ENCODE measurements at regions of chr1 and their contacts with region 1.

Region 1: GRCh38 chr1:66676613-66677298 is 75.5 kb upstream of the DYNLT5 start:
- DNase-seq: no peak
- H3K4me3 ChIP-seq: no peak overlapping the region
- H3K27ac ChIP-seq: peak overlapping the region; percentile 77 to 86
- H3K4me1 ChIP-seq: peaks cover 10 to 33% of the 10 kb centered on the region in 2 donors
- H3K27me3 ChIP-seq: no peaks in the 10 kb centered on the region
- CTCF ChIP-seq: no peak

Region 2: GRCh38 chr1:66533804-66534740 is 142.7 kb before region 1 on chr1 and contains the start of gene SGIP1:
- intact Hi-C with region 1: loop called (anchors 5 kb)
- DNase-seq: peak; percentile 46 to 88
- H3K4me3 ChIP-seq: peak within 1 kb of the TSS; percentile 58 to 71
- H3K27ac ChIP-seq: peak within 1 kb of the TSS; percentile 92 to 95
- H3K4me1 ChIP-seq: peaks cover 3 to 7% of the 10 kb centered on the region in 2 donors
- H3K27me3 ChIP-seq: no peaks in the 10 kb centered on the region
- CTCF ChIP-seq: no peak
- total RNA-seq, gene SGIP1: 1.6 TPM

Region 3: DNA sequence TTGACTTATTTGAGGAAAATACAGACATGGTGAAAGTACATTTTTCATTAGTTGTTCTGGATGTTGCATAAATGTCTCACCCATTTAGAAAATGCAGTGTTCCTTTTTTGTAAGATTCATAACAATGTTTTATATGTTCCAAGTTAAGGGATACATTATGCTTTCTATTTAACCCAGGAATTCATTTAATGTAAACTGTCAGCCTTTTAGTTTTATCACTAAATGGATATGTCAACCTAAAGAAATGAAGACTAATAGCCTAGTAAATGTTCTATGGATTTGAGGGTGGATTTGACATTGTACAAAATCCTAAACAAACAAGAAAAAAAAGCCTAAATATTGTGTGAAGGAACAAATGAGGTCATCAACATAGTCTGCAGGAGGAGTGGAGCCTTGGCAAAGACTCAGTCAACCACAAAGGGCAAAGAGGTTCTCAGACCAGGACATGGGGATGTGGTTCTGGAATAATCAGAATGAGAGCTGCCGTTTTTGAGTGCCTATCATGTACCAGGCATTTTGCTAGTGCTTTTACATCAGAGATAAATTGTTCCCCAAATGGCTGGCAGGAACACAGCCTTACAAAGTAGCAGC is 133.1 kb after region 1 on chr1:
- intact Hi-C with region 1: no loop called
- DNase-seq: no peak
- H3K4me3 ChIP-seq: no peak overlapping the region
- H3K27ac ChIP-seq: no peak overlapping the region
- H3K4me1 ChIP-seq: no peaks in the 10 kb centered on the region
- H3K27me3 ChIP-seq: no peaks in the 10 kb centered on the region
- CTCF ChIP-seq: no peak

Region 4: GRCh38 chr1:66840929-66841328 is 164.2 kb after region 1 on chr1:
- intact Hi-C with region 1: no loop called
- DNase-seq: no peak
- H3K4me3 ChIP-seq: no peak overlapping the region
- H3K27ac ChIP-seq: no peak overlapping the region
- H3K4me1 ChIP-seq: no peaks in the 10 kb centered on the region
- H3K27me3 ChIP-seq: no peaks in the 10 kb centered on the region
- CTCF ChIP-seq: no peak

Region 5: GRCh38 chr1:67020304-67020703 is 343.5 kb after region 1 on chr1:
- intact Hi-C with region 1: no loop called
- DNase-seq: no peak
- H3K4me3 ChIP-seq: no peak overlapping the region
- H3K27ac ChIP-seq: peak overlapping the region; percentile 87 to 90
- H3K4me1 ChIP-seq: peaks cover 0 to 33% of the 10 kb centered on the region in 2 donors
- H3K27me3 ChIP-seq: no peaks in the 10 kb centered on the region
- CTCF ChIP-seq: no peak

Measured in ascending aorta (tissue), 2 donors.